Activated CD4-positive, alpha-beta memory T cell treated with anti-CD3 and anti-CD28 coated beads for 36 hours (primary cell): ENCODE measurements at regions of chr6 and their contacts with region 1.

Region 1: DNA sequence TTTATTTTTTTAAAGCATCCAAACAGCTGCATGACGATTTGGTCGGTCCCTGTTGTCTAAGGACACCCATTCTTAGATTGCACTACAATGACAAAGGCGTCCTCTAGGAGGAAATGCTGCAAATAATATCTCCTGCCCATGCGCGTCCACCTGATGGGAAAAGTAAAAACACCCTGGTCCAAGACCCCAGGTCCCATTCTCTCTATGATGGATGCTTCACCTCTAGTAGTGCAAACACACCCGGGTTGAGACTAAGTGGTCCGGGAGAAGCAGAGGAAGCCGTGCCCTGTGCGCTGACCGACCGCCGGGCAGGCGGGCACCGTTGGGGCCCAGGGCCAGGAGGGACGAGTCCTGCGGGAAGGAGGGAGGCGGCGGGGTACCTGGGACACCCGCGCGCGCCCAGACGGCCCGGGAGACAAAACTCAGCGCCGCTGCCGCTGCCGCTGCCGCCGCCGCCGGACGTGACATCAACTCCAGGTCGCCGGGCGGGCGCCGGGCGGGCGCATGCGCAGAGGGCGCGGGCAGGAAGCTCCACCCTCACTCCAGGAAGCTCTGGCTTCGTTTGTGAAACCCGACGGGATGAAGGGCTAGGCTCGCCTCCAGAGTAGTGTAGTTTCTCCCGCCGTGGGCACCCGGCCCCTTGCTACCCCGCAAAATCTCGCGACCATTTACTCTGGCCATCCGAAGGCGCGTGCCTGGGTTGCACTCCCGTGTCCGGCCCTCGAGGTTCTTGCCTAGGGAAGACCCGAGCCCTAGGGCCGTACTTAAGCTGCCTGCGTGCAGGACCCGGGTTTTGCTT is at the start of gene TBC1D7:
- DNase-seq: peak; percentile 96
- H3K4me3 Mint-ChIP-seq: peak within 1 kb of the TSS; percentile 90
- H3K27ac Mint-ChIP-seq: peak within 1 kb of the TSS; percentile 90
- H3K4me1 Mint-ChIP-seq: peaks cover 20% of the 10 kb centered on the region
- H3K27me3 Mint-ChIP-seq: no peaks in the 10 kb centered on the region
- total RNA-seq, gene TBC1D7: 20.6 to 21.7 TPM

Region 2: DNA sequence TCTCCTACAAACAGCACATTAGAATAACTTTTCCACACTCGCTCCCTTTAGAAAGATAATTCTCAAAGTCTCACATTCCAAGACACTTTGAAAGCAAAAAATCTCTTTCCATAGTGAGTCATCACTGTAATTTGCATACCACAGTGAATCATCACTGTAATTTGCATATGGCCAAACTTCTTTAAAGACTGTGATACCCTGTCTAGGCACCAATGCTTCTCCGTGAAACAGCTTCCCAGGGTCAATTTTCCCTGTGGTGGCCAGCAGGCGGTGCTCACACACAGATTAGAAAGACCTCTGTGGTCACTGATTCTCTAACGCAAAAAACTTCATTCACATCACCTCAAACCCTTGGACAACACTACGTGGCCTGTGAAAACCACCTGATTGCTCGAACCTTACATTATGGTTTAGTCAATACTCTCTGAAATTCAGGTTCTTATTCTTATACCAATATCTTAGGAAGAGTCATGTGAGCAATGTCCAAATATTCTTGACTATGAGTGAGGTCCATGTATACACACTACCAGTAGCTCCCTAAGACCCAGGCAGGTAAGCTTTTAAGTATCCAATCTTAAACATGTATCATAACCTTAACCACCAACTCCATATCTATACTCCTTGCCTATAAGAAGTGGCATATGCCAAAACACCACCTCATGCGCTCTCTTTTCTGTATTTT is 690.2 kb before region 1 on chr6:
- CTCF ChIA-PET with region 1: no interaction called
- POLR2A ChIA-PET with region 1: no interaction called
- intact Hi-C with region 1: loop called (anchors 5 kb)
- DNase-seq: peak; percentile 57
- H3K4me3 Mint-ChIP-seq: no peak overlapping the region
- H3K27ac Mint-ChIP-seq: no peak overlapping the region
- H3K4me1 Mint-ChIP-seq: no peaks in the 10 kb centered on the region
- H3K27me3 Mint-ChIP-seq: peaks cover 24% of the 10 kb centered on the region

Region 3: DNA sequence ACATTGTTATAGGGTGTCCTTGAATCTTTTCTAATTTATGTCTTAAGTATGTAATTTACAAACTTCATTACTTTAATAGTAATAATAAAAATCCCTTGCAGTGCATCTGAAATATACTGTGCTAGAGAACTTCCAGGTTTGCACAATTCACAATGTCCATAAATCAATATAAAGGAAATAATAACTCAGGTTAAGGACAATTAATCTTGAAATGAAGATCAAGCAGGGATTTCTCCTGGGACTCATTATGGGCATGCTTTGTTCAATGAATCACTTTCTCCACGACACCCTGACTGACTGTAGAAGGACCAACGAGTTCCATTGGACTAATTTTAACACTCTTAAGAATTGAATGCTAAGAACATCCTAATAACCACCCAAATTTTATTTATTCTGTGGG is 501.7 kb before region 1 on chr6:
- CTCF ChIA-PET with region 1: no interaction called
- POLR2A ChIA-PET with region 1: no interaction called
- intact Hi-C with region 1: no loop called
- DNase-seq: no peak
- H3K4me3 Mint-ChIP-seq: no peak overlapping the region
- H3K27ac Mint-ChIP-seq: no peak overlapping the region
- H3K4me1 Mint-ChIP-seq: no peaks in the 10 kb centered on the region
- H3K27me3 Mint-ChIP-seq: peaks cover 2% of the 10 kb centered on the region

Region 4: DNA sequence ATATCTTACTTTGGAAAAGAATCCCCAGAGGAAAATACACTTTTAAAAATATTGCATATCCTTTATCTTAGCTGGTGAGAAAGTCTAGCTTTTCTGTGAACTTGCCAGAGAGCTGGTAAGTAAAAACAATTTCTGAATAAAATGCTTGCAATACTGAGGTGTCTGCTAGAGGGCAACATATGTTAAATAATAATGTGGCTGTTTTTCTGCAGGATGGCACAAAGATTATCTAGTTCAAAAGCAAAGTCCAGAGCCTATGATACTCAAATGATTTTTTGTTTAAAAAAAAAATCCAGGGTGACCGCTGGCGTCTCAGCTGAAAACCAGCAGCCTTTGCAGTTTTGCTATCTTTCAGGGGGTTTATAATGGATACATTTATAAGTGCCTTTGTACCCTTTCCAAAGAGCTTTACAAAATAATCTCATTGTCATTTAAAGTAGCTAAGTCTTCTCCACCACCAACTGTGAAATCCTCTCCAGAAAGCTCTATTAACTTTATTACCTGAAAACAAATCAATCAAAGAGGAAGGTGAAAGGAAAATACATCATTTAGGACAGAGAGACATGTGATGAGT is 416.8 kb before region 1 on chr6:
- CTCF ChIA-PET with region 1: interaction called, 33 read pairs
- POLR2A ChIA-PET with region 1: no interaction called
- intact Hi-C with region 1: loop called (anchors 2 kb)
- DNase-seq: no peak
- H3K4me3 Mint-ChIP-seq: no peak overlapping the region
- H3K27ac Mint-ChIP-seq: no peak overlapping the region
- H3K4me1 Mint-ChIP-seq: no peaks in the 10 kb centered on the region
- H3K27me3 Mint-ChIP-seq: no peaks in the 10 kb centered on the region

Region 5: GRCh38 chr6:13217206-13217905 is 110.9 kb before region 1 on chr6:
- CTCF ChIA-PET with region 1: no interaction called
- POLR2A ChIA-PET with region 1: no interaction called
- intact Hi-C with region 1: loop called (anchors 5 kb)
- DNase-seq: no peak
- H3K4me3 Mint-ChIP-seq: no peak overlapping the region
- H3K27ac Mint-ChIP-seq: no peak overlapping the region
- H3K4me1 Mint-ChIP-seq: no peaks in the 10 kb centered on the region
- H3K27me3 Mint-ChIP-seq: peaks cover 5% of the 10 kb centered on the region

Region 6: GRCh38 chr6:13302751-13303667 is 25.3 kb before region 1 on chr6:
- CTCF ChIA-PET with region 1: interaction called, 5 read pairs
- POLR2A ChIA-PET with region 1: interaction called, 17 read pairs
- intact Hi-C with region 1: loop called (anchors 1 kb)
- DNase-seq: peak; percentile 74
- H3K4me3 Mint-ChIP-seq: peak overlapping the region; percentile 24
- H3K27ac Mint-ChIP-seq: peak overlapping the region; percentile 83
- H3K4me1 Mint-ChIP-seq: peaks cover 27% of the 10 kb centered on the region
- H3K27me3 Mint-ChIP-seq: no peaks in the 10 kb centered on the region

Region 7: GRCh38 chr6:13496513-13497180 is 168.4 kb after region 1 on chr6:
- CTCF ChIA-PET with region 1: no interaction called
- POLR2A ChIA-PET with region 1: no interaction called
- intact Hi-C with region 1: no loop called
- DNase-seq: no peak
- H3K4me3 Mint-ChIP-seq: no peak overlapping the region
- H3K27ac Mint-ChIP-seq: no peak overlapping the region
- H3K4me1 Mint-ChIP-seq: peaks cover 5% of the 10 kb centered on the region
- H3K27me3 Mint-ChIP-seq: no peaks in the 10 kb centered on the region